Caco-2 (cell line): ENCODE measurements at regions of chr2 and their contacts with region 1.

Region 1: DNA sequence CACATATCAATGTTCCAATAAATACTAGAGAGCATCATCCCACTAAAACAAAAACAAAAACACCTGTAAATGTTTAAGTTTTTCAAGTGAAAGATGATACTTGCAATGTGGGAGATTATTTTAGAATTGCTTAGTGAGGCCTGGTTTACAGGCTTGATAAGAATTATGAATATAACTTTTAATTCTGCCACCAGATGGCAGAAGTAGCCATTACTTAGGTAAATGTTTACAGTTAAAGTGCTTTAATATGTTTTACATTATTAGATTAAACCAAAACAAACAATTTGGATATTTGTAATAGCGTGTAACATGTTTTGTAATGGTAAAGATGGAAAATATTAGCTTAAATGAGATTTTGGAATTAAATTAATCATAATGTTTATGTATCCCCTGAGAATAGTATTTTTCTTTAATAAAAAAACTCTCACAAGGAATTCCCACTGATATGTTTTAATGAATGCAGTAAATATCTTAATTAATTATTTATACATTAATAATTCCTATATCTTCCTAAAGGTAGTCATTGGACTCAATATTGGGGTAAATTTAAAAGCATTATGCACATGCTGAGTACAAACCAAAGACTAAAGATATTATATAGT is 522.0 kb downstream of the SPAG16 start:
- DNase-seq: no peak
- H3K4me3 ChIP-seq: no peak overlapping the region
- H3K4me3 Mint-ChIP-seq: no peak overlapping the region
- H3K27ac Mint-ChIP-seq: no peak overlapping the region
- H3K4me1 ChIP-seq: no peaks in the 10 kb centered on the region
- H3K4me1 Mint-ChIP-seq: no peaks in the 10 kb centered on the region
- H3K27me3 ChIP-seq: no peaks in the 10 kb centered on the region
- H3K27me3 Mint-ChIP-seq: no peaks in the 10 kb centered on the region
- CTCF ChIP-seq: peak; percentile 13 to 36

Region 2: DNA sequence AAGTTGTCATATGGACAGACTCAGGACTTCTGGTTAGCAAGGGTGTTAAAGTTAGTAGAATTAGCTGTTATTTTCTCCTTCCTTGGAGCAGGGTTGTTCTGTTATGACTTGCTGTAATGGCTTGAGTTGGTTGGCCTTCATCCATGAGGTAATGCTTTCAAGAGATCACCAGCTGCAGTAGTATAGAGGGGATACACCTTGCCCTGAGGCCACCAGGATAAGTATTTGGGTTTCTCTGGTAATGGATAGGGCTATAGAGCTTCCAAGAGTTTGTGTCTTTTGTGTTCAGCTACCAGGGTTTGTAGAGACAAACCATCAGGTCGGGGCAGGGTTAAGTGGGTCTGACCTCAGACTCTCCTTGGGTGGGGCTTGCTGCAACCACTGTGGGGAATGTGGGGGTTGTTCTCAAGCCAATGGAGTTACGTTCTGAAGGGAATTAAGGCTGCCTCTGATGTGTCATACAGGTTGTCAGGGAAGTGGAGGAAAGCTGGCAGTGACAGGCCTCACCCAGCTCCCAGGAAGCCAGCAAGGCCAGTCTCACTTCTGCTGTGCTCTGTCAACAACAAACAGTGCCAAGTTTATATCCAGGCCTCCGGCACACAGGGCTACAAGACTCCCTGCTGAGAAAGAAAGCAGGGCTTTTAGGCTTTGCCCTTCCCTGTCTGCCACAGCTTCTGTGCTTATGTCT is 165.3 kb before region 1 on chr2:
- CTCF ChIA-PET with region 1: no interaction called
- POLR2A ChIA-PET with region 1: no interaction called
- intact Hi-C with region 1: no loop called
- DNase-seq: no peak
- H3K4me3 ChIP-seq: no peak overlapping the region
- H3K4me3 Mint-ChIP-seq: no peak overlapping the region
- H3K27ac Mint-ChIP-seq: no peak overlapping the region
- H3K4me1 ChIP-seq: no peaks in the 10 kb centered on the region
- H3K4me1 Mint-ChIP-seq: no peaks in the 10 kb centered on the region
- H3K27me3 ChIP-seq: no peaks in the 10 kb centered on the region
- H3K27me3 Mint-ChIP-seq: no peaks in the 10 kb centered on the region
- CTCF ChIP-seq: no peak

Region 3: DNA sequence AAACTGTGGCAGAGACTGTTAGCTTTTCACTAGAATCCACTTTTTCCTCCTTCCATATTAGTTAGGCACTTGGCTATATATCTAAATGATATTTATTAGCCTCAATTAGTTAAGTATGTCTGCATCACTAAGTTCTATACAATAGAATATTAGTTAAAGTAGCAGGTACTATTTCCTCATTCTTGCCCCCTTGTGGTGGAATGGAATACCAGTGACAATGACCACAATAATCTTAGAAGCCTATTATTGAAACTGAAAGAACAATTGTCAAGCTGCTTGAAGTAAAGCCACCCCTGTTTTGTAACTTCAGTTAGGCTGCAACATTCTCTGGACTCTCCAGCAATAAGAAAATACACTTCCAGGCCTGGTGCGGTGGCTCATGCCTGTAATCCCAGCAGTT is 128.3 kb after region 1 on chr2:
- CTCF ChIA-PET with region 1: no interaction called
- POLR2A ChIA-PET with region 1: no interaction called
- intact Hi-C with region 1: loop called (anchors 1 kb)
- DNase-seq: peak in 1 of 2 experiments; percentile 14
- H3K4me3 ChIP-seq: no peak overlapping the region
- H3K4me3 Mint-ChIP-seq: no peak overlapping the region
- H3K27ac Mint-ChIP-seq: no peak overlapping the region
- H3K4me1 ChIP-seq: no peaks in the 10 kb centered on the region
- H3K4me1 Mint-ChIP-seq: peaks cover under 1% of the 10 kb centered on the region
- H3K27me3 ChIP-seq: no peaks in the 10 kb centered on the region
- H3K27me3 Mint-ChIP-seq: no peaks in the 10 kb centered on the region
- CTCF ChIP-seq: peak; percentile 36 to 43

Region 4: DNA sequence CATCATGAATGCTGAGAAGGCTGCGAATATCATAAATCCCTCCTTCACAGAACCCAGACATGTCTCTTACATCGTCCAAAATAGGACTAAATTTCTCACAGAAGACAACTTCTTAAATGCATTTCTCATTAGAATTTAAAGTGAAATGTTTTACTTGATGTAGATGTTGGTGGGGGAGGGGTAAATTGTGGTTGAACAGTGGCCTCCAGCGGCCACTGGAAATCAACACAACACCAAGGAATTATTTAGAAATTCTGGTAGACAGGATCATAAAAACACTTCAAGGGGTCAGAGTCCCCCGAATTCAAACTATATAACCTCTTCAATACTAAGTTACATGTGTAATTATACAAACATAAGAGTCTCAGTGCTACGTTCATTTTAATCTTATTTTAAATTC is 1196.3 kb after region 1 on chr2:
- CTCF ChIA-PET with region 1: no interaction called
- POLR2A ChIA-PET with region 1: no interaction called
- intact Hi-C with region 1: loop called (anchors 10 kb)
- DNase-seq: peak; percentile 36 to 48
- H3K4me3 ChIP-seq: no peak overlapping the region
- H3K4me3 Mint-ChIP-seq: no peak overlapping the region
- H3K27ac Mint-ChIP-seq: no peak overlapping the region
- H3K4me1 ChIP-seq: no peaks in the 10 kb centered on the region
- H3K4me1 Mint-ChIP-seq: no peaks in the 10 kb centered on the region
- H3K27me3 ChIP-seq: no peaks in the 10 kb centered on the region
- H3K27me3 Mint-ChIP-seq: peaks cover 5% of the 10 kb centered on the region
- CTCF ChIP-seq: peak; percentile 63 to 65